Psoas muscle (tissue), 8 donors: ENCODE measurements at regions of chr11 and their contacts with region 1.

Region 1: DNA sequence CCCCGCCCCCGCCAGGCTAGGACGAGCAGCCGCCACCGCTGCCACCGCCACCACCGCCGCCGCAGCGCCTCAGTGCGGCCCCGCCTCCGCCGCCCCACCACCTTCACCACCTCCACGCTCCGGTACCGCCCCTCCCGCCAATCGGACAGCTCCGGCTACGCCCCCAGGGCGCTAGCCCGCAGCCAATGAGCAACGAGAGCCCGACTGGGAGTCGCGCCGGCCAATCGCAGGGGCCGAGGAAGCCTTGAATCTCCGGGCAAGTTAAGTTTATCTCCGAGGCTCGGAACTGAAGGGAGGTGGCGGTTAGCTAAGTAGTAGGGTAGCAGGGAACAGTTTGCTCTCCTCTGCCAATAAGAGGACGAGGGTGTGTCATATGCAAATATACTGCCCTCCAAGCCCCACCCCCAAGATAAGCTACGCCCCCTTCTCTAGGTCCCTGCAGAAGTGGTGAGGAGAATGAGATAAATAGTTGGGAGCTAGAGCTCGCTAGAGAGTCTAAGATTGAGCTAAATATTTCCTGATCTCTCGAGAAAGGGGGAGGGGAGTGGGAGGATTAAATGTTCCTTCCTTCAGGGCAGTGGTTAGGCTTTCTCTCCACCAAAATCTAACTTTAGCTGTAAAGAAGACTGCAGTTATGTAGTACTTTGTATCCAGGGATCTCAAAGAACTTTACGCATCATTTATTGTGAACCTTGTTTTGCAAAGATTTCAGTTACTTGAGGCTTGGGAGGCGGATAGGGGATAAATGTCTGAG is at the start of gene SESN3:
- DNase-seq: peak; percentile 99
- ATAC-seq: peak; percentile 97 to 98 (median 98)
- H3K4me3 ChIP-seq: peak within 1 kb of the TSS; percentile 83
- H3K27ac ChIP-seq: peak within 1 kb of the TSS; percentile 62
- H3K4me1 ChIP-seq: peaks cover 8% of the 10 kb centered on the region
- H3K27me3 ChIP-seq: no peaks in the 10 kb centered on the region
- CTCF ChIP-seq: no peak
- total RNA-seq, gene SESN3: 5.3 to 94.6 (median 15.6) TPM

Region 2: DNA sequence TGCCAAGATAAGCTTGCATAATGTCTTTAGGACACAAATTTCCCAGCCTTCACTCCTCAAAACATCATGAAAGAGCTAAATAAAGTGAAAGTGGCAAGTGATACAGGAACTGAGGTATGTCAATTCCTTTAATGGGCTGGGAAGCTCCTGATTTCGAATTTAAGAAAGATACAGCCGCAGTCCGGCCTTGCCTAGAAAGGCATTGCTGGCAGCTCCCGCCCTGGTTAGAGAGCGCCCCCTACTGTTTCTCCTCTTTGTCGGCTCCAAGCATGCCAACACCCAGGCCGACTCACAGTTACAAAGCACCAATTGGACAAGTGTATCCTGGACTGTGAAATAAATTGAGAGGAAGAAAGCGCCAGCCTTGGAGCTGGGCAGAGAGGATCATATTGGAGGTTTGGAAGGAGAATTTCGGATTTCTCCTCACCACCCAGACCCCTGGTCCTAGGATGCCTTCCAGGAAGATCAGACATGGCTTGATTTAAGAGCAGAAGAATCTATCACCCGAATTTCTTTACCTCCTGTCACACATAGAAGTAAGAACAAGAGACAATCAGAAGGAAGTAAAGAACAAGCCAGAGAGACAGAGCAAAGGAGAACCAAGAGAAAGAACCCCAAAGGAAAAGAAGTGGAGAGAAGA is 474.3 kb after region 1 on chr11:
- intact Hi-C with region 1: loop called in 1 of 2 experiments (anchors 5 kb)
- DNase-seq: peak; percentile 77 to 88
- ATAC-seq: peak; percentile 93 to 99 (median 98)
- H3K4me3 ChIP-seq: no peak overlapping the region
- H3K27ac ChIP-seq: no peak overlapping the region
- H3K4me1 ChIP-seq: peaks cover 2% of the 10 kb centered on the region
- H3K27me3 ChIP-seq: no peaks in the 10 kb centered on the region
- CTCF ChIP-seq: peak; percentile 95